Prostate gland (tissue), 2 donors: ENCODE measurements at regions of chr5 and their contacts with region 1.

Region 1: GRCh38 chr5:96934708-96935558 is 947 bp upstream of the LNPEP start:
- DNase-seq: peak; percentile 91
- H3K4me3 ChIP-seq: peak overlapping the region; percentile 83 to 94
- H3K27ac ChIP-seq: peak overlapping the region; percentile 95 to 96
- H3K4me1 ChIP-seq: peaks cover 6% of the 10 kb centered on the region
- H3K27me3 ChIP-seq: no peaks in the 10 kb centered on the region
- CTCF ChIP-seq: peak in 2 of 4 experiments; percentile 32 to 39
- POLR2A ChIP-seq: peak; percentile 33

Region 2: GRCh38 chr5:96752341-96753016 is 182.5 kb before region 1 on chr5:
- intact Hi-C with region 1: loop called (anchors 10 kb)
- DNase-seq: peak; percentile 52
- H3K4me3 ChIP-seq: no peak overlapping the region
- H3K27ac ChIP-seq: no peak overlapping the region
- H3K4me1 ChIP-seq: no peaks in the 10 kb centered on the region
- H3K27me3 ChIP-seq: no peaks in the 10 kb centered on the region
- CTCF ChIP-seq: peak; percentile 34 to 51 (median 49)
- POLR2A ChIP-seq: no peak

Region 3: DNA sequence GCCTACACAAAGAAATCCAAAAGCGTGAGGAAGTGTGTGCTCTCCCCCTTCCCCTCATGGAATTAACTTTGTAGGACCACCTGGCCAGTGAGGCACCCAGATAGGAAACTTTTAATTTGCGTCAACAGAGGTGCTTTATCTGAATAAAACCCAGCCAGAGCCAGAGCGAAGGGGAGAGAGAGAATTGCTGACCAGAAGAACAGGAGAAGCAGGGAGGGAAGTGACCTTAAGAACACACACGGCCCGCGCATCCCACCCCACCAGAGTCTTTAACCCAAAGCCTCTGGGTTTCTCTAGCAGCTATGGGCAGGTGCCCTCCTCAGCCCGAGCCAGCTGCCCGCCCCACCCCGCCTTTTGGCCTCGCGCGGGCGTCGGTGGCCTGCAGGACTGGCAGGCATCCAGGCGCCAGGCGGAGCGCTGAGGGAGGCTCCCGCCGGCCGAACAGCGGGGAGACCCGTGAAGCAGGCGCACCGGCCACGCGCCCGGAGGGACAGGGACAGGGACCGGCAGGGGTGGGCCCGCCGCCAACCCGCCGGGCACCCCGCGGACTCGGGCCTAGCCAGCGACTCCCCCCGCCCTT is 127.8 kb before region 1 on chr5:
- intact Hi-C with region 1: loop called (anchors 5 kb)
- DNase-seq: peak; percentile 69
- H3K4me3 ChIP-seq: peak overlapping the region; percentile 90 to 99
- H3K27ac ChIP-seq: peak overlapping the region; percentile 99 to 100
- H3K4me1 ChIP-seq: no peaks in the 10 kb centered on the region
- H3K27me3 ChIP-seq: no peaks in the 10 kb centered on the region
- CTCF ChIP-seq: peak in 2 of 4 experiments; percentile 5 to 22
- POLR2A ChIP-seq: no peak

Region 4: DNA sequence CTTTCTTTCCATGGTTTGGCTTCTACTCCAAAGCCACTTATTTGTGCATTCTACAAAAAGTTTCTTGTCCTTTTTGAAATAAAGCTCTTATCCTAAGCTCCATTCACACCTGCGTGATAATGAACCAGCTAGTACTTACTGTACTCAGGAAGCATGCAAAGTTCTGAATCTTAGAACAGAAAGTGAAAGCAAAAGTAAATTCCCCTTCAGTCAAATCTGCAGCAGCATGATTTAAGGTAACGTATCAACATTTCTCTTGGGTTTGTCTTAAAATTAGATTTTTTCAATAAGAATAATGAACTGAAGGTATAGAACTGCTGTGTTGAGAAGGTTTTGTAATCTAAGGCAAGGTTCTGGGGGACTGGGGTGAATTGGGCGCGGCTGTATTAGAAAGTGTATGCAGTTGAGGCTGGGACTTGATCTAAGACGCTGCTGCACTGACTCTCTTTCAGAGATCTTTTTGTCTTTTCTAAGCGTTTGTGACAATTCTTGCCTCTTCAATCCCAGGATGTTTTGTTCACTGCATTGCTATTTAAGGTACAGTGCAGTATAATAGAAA is 58.6 kb before region 1 on chr5 and contains the start of gene ERAP2:
- intact Hi-C with region 1: loop called (anchors 5 kb)
- DNase-seq: no peak
- H3K4me3 ChIP-seq: peak within 1 kb of the TSS; percentile 39 to 42
- H3K27ac ChIP-seq: peak within 1 kb of the TSS; percentile 70 to 73
- H3K4me1 ChIP-seq: no peaks in the 10 kb centered on the region
- H3K27me3 ChIP-seq: no peaks in the 10 kb centered on the region
- CTCF ChIP-seq: no peak
- POLR2A ChIP-seq: no peak
- total RNA-seq, gene ERAP2: 7.7 to 19.0 TPM